GM12878 (cell line): ENCODE measurements at regions of chr3 and their contacts with region 1.

Region 1: GRCh38 chr3:67017211-67017610 is 19.1 kb downstream of the KBTBD8 start:
- DNase-seq: no peak
- ATAC-seq: peak; percentile 50
- H3K4me3 ChIP-seq: no peak overlapping the region; the same call in 1 of the 2 replicates
- H3K27ac ChIP-seq: peak overlapping the region; percentile 20
- H3K4me1 ChIP-seq: peaks cover 38% of the 10 kb centered on the region
- H3K27me3 ChIP-seq: no peaks in the 10 kb centered on the region
- CTCF ChIP-seq: no peak
- EP300 ChIP-seq: no peak
- POLR2A ChIP-seq: no peak
- RAD21 ChIP-seq: no peak

Region 2: GRCh38 chr3:66983101-66983500 is 34.1 kb before region 1 on chr3:
- CTCF ChIA-PET with region 1: no interaction called
- POLR2A ChIA-PET with region 1: no interaction called
- RAD21 ChIA-PET with region 1: no interaction called
- SMC1A ChIA-PET with region 1: no interaction called
- in situ Hi-C with region 1: no loop called
- intact Hi-C with region 1: no loop called
- DNase-seq: no peak
- ATAC-seq: no peak
- H3K4me3 ChIP-seq: no peak overlapping the region
- H3K27ac ChIP-seq: no peak overlapping the region
- H3K4me1 ChIP-seq: no peaks in the 10 kb centered on the region
- H3K27me3 ChIP-seq: no peaks in the 10 kb centered on the region; a peak in 1 of 4 replicates
- CTCF ChIP-seq: 0 out of 6 replicates have a peak, but pooled peaks of 1 of the 3 experiments have one; percentile 7
- EP300 ChIP-seq: no peak
- POLR2A ChIP-seq: no peak
- RAD21 ChIP-seq: no peak

Region 3: DNA sequence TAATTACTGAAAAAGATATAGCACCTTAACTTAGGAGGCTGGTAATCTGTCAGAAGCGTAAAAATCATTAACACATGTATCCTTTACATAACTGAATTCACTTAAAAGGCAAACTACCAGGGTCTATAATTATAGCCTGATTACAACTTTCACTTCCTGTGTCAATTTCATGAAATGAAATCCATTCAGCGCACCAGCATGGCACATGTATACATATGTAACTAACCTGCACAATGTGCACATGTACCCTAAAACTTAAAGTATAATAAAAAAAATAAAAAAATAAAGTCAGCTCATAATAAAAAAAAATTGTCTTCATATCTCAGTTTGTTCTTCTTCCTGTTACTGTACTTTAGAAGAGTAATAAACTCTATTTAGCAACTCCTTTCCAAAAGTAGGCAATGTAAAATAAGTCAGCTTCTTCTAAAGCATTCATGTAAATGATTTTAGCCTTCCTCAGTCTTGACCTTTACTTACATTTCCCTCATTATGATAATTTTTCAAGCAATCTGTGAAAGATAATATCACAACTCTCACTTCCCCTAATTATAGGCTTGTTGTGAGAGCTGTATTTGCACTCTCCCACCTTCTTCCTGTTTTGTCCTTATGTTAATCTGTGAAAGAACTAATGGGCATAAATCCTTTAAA is 31.0 kb after region 1 on chr3:
- CTCF ChIA-PET with region 1: interaction called, 7 read pairs
- POLR2A ChIA-PET with region 1: interaction called, 5 read pairs
- RAD21 ChIA-PET with region 1: interaction called, 12 read pairs
- SMC1A ChIA-PET with region 1: interaction called, 5 read pairs
- in situ Hi-C with region 1: no loop called
- intact Hi-C with region 1: no loop called
- DNase-seq: peak; percentile 47
- ATAC-seq: peak; percentile 94
- H3K4me3 ChIP-seq: no peak overlapping the region
- H3K27ac ChIP-seq: peak overlapping the region; percentile 54
- H3K4me1 ChIP-seq: peaks cover 24% of the 10 kb centered on the region
- H3K27me3 ChIP-seq: no peaks in the 10 kb centered on the region
- CTCF ChIP-seq: no peak
- EP300 ChIP-seq: peak in 1 of 2 experiments; percentile 78; a peak in 3 of 4 replicates
- POLR2A ChIP-seq: no peak
- RAD21 ChIP-seq: no peak